Naive thymus-derived CD4-positive, alpha-beta T cell (primary cell): ENCODE measurements at regions of chr7 and their contacts with region 1.

Region 1: DNA sequence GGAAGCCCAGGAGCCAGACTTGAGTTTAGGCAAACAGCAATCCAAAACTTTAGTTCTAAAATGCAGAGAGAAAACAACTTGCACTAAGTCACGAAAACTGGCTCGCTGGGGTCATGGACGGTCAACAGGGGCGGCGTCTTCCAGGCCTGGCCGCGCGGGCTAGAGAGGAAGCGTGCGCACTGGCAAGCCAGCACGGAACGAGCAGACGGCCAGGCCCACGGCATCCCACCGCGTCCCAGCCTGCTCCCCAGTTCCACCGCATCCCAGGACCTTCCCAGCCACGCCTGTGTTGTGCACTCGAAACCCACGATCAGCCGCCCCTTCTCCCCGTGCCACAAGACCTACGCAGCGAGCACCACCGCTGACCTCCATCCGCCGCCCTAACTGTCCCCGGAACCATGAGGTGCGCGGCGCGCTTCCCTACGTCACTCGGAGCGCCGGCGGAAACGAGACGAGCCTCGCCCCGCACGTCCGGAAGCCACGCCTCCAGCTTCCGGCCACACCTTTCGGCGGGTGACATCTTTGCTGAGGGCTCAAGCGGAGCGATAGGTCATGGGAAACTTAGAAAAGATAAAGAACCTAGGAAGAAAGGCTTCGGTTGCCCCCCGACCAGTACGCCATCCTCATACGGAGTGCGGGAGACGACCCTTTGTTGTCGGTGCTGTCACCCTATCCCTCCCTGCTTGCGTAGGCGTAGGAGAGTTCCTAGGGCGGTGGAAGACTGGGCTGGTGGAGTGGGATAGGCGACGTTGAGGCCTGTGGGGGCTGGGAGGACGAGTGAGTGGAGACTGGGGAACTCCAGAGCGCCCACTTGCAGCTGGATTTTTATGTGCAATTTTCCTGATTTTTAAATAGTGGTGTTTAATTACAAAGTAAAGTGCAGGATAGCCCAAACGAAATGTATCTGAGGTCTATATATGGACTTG is at the start of gene TBRG4:
- DNase-seq: peak; percentile 88 to 96 (median 94)
- ATAC-seq: peak; percentile 94
- H3K4me3 ChIP-seq: peak within 1 kb of the TSS; percentile 80
- H3K4me3 Mint-ChIP-seq: peak within 1 kb of the TSS; percentile 93 to 100 (median 96)
- H3K27ac ChIP-seq: peak within 1 kb of the TSS; percentile 98
- H3K27ac Mint-ChIP-seq: peak within 1 kb of the TSS; percentile 98 to 100 (median 99)
- H3K4me1 ChIP-seq: peaks cover 17 to 45% of the 10 kb centered on the region in 2 donors
- H3K4me1 Mint-ChIP-seq: peaks cover 30 to 59% (median 50%) of the 10 kb centered on the region in 7 donors
- H3K27me3 ChIP-seq: no peaks in the 10 kb centered on the region
- H3K27me3 Mint-ChIP-seq: peaks cover 0 to 31% (median 0%) of the 10 kb centered on the region in 5 donors
- total RNA-seq, gene TBRG4: 93.7 to 143 (median 107) TPM

Region 2: DNA sequence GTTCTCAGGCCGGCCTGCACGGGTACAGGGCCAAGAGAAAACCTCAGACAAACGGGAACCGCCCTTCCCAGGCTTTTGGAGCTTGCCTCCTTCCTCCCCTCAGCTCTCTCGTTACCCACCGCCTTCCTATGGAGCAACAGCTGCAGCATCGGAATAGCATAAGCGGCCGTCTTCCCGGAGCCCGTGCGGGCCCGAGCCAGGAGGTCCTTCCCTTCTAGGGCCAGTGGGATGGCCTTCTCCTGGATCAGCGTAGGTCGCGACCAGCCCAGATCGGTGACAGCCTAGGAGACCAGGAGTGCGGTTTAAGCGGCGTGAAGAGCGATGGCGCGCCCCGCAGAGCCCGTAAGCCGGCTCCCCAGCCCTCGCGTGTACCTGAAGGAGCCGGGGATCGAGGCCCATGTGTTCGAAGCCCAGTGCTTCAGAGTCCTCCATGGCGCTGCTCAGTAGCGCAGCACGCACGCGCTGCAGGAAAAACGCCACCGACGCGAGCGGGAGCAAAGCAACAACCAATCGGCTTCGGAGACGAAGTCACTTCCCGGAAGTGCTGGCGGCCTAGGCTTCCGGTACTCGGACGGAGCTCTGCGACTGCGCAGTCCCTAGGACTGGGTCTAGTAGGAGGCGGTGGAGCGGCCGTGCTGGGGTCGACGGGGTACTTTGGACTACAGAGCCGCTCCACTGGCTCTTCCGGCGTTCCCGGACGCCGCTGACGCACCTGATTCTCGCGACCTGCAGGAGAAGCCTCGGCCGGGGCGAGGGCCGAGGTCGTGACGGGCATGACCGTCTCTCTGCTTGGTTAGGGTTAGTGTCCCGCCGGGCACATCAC is 537.9 kb before region 1 on chr7 and contains the start of gene DDX56:
- CTCF ChIA-PET with region 1: no interaction called
- POLR2A ChIA-PET with region 1: interaction called, 6 read pairs
- intact Hi-C with region 1: loop called in 1 of 2 experiments (anchors 2 kb)
- DNase-seq: peak; percentile 72 to 90 (median 87)
- ATAC-seq: peak; percentile 97
- H3K4me3 ChIP-seq: peak within 1 kb of the TSS; percentile 95
- H3K4me3 Mint-ChIP-seq: peak within 1 kb of the TSS; percentile 91 to 98 (median 95)
- H3K27ac ChIP-seq: peak within 1 kb of the TSS; percentile 95
- H3K27ac Mint-ChIP-seq: peak within 1 kb of the TSS; percentile 92 to 99 (median 98)
- H3K4me1 ChIP-seq: peaks cover 19 to 27% of the 10 kb centered on the region in 2 donors
- H3K4me1 Mint-ChIP-seq: peaks cover 20 to 48% (median 33%) of the 10 kb centered on the region in 7 donors
- H3K27me3 ChIP-seq: no peaks in the 10 kb centered on the region
- H3K27me3 Mint-ChIP-seq: no peaks in the 10 kb centered on the region
- total RNA-seq, gene DDX56: 82.8 to 124 (median 100.0) TPM

Region 3: GRCh38 chr7:44606450-44607254 is 504.9 kb before region 1 on chr7 and contains the start of gene OGDH:
- CTCF ChIA-PET with region 1: no interaction called
- POLR2A ChIA-PET with region 1: interaction called, 4 read pairs
- intact Hi-C with region 1: loop called (anchors 1 to 2 kb)
- DNase-seq: peak; percentile 99 to 100 (median 100)
- ATAC-seq: peak; percentile 95
- H3K4me3 ChIP-seq: peak within 1 kb of the TSS; percentile 71
- H3K4me3 Mint-ChIP-seq: peak within 1 kb of the TSS; percentile 81 to 99 (median 98)
- H3K27ac ChIP-seq: peak within 1 kb of the TSS; percentile 93
- H3K27ac Mint-ChIP-seq: peak within 1 kb of the TSS; percentile 93 to 100 (median 98)
- H3K4me1 ChIP-seq: peaks cover 13 to 17% of the 10 kb centered on the region in 2 donors
- H3K4me1 Mint-ChIP-seq: peaks cover 0 to 45% (median 37%) of the 10 kb centered on the region in 7 donors
- H3K27me3 ChIP-seq: no peaks in the 10 kb centered on the region
- H3K27me3 Mint-ChIP-seq: peaks cover 0 to 20% (median 0%) of the 10 kb centered on the region in 5 donors
- total RNA-seq, gene OGDH: 43.1 to 122 (median 66.3) TPM

Region 4: DNA sequence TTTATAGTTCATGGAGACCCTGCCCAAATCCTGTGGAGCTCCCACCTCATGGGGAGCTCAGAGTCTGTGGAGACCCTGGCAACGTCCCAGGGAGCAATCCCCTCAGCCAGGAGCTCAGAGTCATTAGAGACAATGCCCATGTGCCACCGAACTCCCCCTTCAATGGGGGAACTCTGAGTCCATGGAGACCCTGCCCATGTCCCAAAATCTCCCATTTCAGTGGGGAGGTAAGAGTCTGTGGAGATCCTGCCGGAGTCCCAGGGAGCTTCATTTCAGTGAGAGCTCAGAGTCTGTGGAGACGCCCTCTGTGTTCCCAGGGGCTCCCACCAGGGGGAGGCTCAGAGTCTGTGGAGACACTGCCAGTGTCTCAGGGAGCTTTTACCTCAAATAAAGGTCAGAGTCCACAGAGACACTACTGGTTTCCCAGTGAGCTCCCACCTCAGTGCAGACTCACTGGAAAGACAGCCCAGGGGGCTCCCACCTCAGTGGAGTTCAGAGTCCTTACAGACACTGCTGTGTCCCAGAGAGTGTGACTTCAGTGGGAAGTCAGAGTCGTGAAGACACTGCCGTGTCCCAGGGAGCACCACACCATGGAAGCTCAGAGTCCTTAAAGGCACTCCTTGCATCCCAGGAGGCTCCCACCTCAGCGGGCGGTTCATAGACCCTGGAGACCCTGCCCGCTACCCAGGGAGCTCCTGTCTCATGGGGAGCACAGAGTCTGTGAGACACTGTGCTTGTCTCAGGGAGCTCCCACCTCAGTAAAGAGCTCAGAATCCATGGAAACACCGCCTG is 137.8 kb before region 1 on chr7:
- CTCF ChIA-PET with region 1: interaction called, 4 read pairs
- POLR2A ChIA-PET with region 1: interaction called, 19 read pairs
- intact Hi-C with region 1: loop called (anchors 1 kb)
- DNase-seq: peak in 7 of 9 donors; percentile 52 to 70 (median 66)
- ATAC-seq: peak; percentile 31
- H3K4me3 ChIP-seq: no peak overlapping the region
- H3K4me3 Mint-ChIP-seq: peak overlapping the region in 4 of 10 donors; percentile 5 to 23 (median 10)
- H3K27ac ChIP-seq: peak overlapping the region; percentile 83
- H3K27ac Mint-ChIP-seq: peak overlapping the region in 8 of 9 donors; percentile 18 to 88 (median 67)
- H3K4me1 ChIP-seq: peaks cover 28 to 46% of the 10 kb centered on the region in 2 donors
- H3K4me1 Mint-ChIP-seq: peaks cover 29 to 59% (median 40%) of the 10 kb centered on the region in 7 donors
- H3K27me3 ChIP-seq: no peaks in the 10 kb centered on the region
- H3K27me3 Mint-ChIP-seq: no peaks in the 10 kb centered on the region

Region 5: DNA sequence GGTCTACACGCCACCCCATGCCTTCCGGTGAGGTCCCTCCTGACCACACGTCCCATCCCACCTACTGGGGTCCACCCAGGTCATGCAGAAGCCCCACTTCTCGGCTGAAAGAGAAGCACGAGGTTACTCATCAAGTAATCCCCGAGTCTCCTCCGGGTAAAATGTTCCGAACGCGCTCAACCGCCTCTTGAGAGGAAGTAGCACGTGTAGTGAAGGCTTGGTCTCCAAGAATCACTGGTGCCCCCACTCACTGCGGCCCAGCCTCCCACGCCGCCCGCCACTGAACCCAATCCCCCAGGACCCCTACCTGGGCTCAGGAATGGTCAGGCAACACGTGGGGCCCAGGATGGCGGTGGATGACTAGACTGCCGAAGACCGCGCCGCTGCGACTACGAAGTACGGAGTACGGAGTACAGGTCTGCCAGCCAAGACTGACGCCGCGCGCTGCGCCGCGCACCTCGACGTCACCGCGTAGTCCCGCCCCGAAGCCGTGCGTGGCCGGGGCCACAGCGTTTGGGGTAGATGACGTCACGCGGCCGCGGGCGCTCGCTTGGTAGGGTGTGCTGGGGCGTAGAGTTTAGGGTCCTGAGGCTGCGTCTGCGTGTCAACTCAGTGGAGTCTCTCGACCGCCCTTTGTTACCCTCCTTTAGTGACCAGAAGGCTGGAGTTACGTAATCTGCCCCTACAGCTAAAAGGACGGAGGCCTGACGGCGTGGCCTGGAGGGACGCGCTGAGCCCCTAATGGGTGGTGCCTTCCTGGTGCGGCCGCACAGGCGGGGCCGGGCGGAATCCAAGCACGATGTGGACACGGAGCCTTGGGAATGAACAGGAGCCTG is 125.1 kb before region 1 on chr7:
- CTCF ChIA-PET with region 1: no interaction called
- POLR2A ChIA-PET with region 1: interaction called, 3 read pairs
- intact Hi-C with region 1: loop called in 1 of 2 experiments (anchors 1 kb)
- DNase-seq: peak; percentile 93 to 97 (median 96)
- ATAC-seq: peak; percentile 98
- H3K4me3 ChIP-seq: peak overlapping the region; percentile 92
- H3K4me3 Mint-ChIP-seq: peak overlapping the region; percentile 94 to 100 (median 97)
- H3K27ac ChIP-seq: peak overlapping the region; percentile 97
- H3K27ac Mint-ChIP-seq: peak overlapping the region; percentile 97 to 99 (median 98)
- H3K4me1 ChIP-seq: peaks cover 25 to 33% of the 10 kb centered on the region in 2 donors
- H3K4me1 Mint-ChIP-seq: peaks cover 24 to 66% (median 56%) of the 10 kb centered on the region in 7 donors
- H3K27me3 ChIP-seq: no peaks in the 10 kb centered on the region
- H3K27me3 Mint-ChIP-seq: no peaks in the 10 kb centered on the region

Region 6: GRCh38 chr7:45064047-45064725 is 47.4 kb before region 1 on chr7:
- CTCF ChIA-PET with region 1: no interaction called
- POLR2A ChIA-PET with region 1: no interaction called
- intact Hi-C with region 1: no loop called
- DNase-seq: no peak
- ATAC-seq: no peak
- H3K4me3 ChIP-seq: no peak overlapping the region
- H3K4me3 Mint-ChIP-seq: no peak overlapping the region
- H3K27ac ChIP-seq: no peak overlapping the region
- H3K27ac Mint-ChIP-seq: peak overlapping the region in 5 of 9 donors; percentile 7 to 51 (median 28)
- H3K4me1 ChIP-seq: peaks cover 0 to 14% of the 10 kb centered on the region in 2 donors
- H3K4me1 Mint-ChIP-seq: peaks cover 31 to 66% (median 55%) of the 10 kb centered on the region in 7 donors
- H3K27me3 ChIP-seq: no peaks in the 10 kb centered on the region
- H3K27me3 Mint-ChIP-seq: no peaks in the 10 kb centered on the region

Region 7: DNA sequence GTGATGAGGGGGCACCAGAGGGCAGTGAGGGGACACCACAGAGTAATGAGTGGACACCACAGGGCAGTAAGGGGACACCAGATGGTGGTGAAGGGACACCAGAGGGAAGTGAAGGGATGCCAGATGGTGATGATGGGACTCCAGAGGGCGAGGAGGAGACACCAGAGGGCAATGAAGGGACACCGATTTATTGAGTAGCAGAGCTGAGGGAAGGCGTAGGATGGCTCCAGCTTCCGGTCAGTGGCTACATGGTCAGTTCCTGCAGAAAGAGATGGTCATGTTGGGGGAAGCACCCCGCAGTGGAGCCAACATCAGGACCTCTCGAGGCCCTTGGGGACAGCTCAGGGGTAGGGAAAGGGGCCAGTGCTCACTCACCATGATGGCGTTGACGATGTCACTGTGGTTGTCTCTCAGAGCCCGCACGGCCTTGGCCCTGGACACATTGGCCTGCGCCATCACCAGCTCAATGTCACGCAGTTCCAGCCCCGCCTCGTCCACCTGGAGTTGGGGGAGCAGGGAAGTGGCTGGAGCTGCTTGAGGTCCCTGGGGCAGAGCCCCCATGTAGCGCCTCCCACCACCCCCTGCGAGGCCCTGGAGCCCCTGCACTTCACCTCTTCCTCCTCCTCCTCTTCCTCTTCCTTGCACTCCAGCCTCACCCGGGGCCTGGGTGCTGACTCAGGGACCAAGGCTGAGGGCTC is 31.1 kb before region 1 on chr7:
- CTCF ChIA-PET with region 1: interaction called, 3 read pairs
- POLR2A ChIA-PET with region 1: interaction called, 4 read pairs
- intact Hi-C with region 1: loop called in 1 of 2 experiments (anchors 1 kb)
- DNase-seq: no peak
- ATAC-seq: peak; percentile 30
- H3K4me3 ChIP-seq: no peak overlapping the region
- H3K4me3 Mint-ChIP-seq: no peak overlapping the region
- H3K27ac ChIP-seq: no peak overlapping the region
- H3K27ac Mint-ChIP-seq: peak overlapping the region; percentile 17 to 84 (median 68)
- H3K4me1 ChIP-seq: no peaks in the 10 kb centered on the region
- H3K4me1 Mint-ChIP-seq: peaks cover 0 to 19% (median 3%) of the 10 kb centered on the region in 7 donors
- H3K27me3 ChIP-seq: no peaks in the 10 kb centered on the region
- H3K27me3 Mint-ChIP-seq: no peaks in the 10 kb centered on the region

Region 8: GRCh38 chr7:45143616-45144015 is 32.1 kb after region 1 on chr7:
- CTCF ChIA-PET with region 1: no interaction called
- POLR2A ChIA-PET with region 1: no interaction called
- intact Hi-C with region 1: no loop called
- DNase-seq: no peak
- ATAC-seq: no peak
- H3K4me3 ChIP-seq: no peak overlapping the region
- H3K4me3 Mint-ChIP-seq: no peak overlapping the region
- H3K27ac ChIP-seq: no peak overlapping the region
- H3K27ac Mint-ChIP-seq: no peak overlapping the region
- H3K4me1 ChIP-seq: no peaks in the 10 kb centered on the region
- H3K4me1 Mint-ChIP-seq: peaks cover 0 to 6% (median 0%) of the 10 kb centered on the region in 7 donors
- H3K27me3 ChIP-seq: no peaks in the 10 kb centered on the region
- H3K27me3 Mint-ChIP-seq: peaks cover 3 to 16% (median 11%) of the 10 kb centered on the region in 5 donors